Right lobe of liver (tissue), 6 donors: ENCODE measurements at regions of chr16 and their contacts with region 1.

Region 1: GRCh38 chr16:85717393-85718121 is 28.8 kb upstream of the GINS2 start:
- DNase-seq: peak; percentile 82 to 90 (median 89)
- ATAC-seq: peak; percentile 78 to 90 (median 86)
- H3K4me3 ChIP-seq: no peak overlapping the region
- H3K27ac ChIP-seq: no peak overlapping the region
- H3K4me1 ChIP-seq: peaks cover 0 to 15% (median 3%) of the 10 kb centered on the region in 4 donors
- H3K27me3 ChIP-seq: no peaks in the 10 kb centered on the region
- CTCF ChIP-seq: peak; percentile 78 to 82 (median 80)
- POLR2A ChIP-seq: no peak

Region 2: GRCh38 chr16:85659805-85660495 is 57.6 kb before region 1 on chr16:
- intact Hi-C with region 1: loop called (anchors 5 to 10 kb)
- DNase-seq: peak; percentile 54 to 67 (median 65)
- ATAC-seq: peak; percentile 73 to 84 (median 75)
- H3K4me3 ChIP-seq: no peak overlapping the region
- H3K27ac ChIP-seq: no peak overlapping the region
- H3K4me1 ChIP-seq: no peaks in the 10 kb centered on the region
- H3K27me3 ChIP-seq: no peaks in the 10 kb centered on the region
- CTCF ChIP-seq: peak; percentile 74 to 93 (median 88)
- POLR2A ChIP-seq: no peak